ENCODE measurements at regions of chr19 and their contacts with region 1.

Region 1: GRCh38 chr19:10695401-10696398 is 5.5 kb upstream of the QTRT1 start:
- DNase-seq: peak; percentile 84
- ATAC-seq: peak; percentile 91
- H3K4me3 ChIP-seq: peak overlapping the region in 1 of 3 experiments; percentile 18; a peak in 1 of 6 replicates
- H3K27ac ChIP-seq: no peak overlapping the region
- H3K4me1 ChIP-seq: peaks cover 19% of the 10 kb centered on the region
- H3K27me3 ChIP-seq: peaks cover 0 to 3% of the 10 kb centered on the region in 2 experiments; a peak in 1 of 5 replicates
- CTCF ChIP-seq: peak; percentile 48
- EP300 ChIP-seq: no peak
- POLR2A ChIP-seq: no peak
- RAD21 ChIP-seq: no peak

Region 2: GRCh38 chr19:10471909-10472308 is 223.8 kb before region 1 on chr19:
- CTCF ChIA-PET with region 1: no interaction called
- POLR2A ChIA-PET with region 1: no interaction called
- in situ Hi-C with region 1: no loop called
- intact Hi-C with region 1: loop called (anchors 5 kb)
- DNase-seq: peak; percentile 54
- ATAC-seq: peak; percentile 70
- H3K4me3 ChIP-seq: no peak overlapping the region
- H3K27ac ChIP-seq: no peak overlapping the region
- H3K4me1 ChIP-seq: no peaks in the 10 kb centered on the region
- H3K27me3 ChIP-seq: no peaks in the 10 kb centered on the region
- CTCF ChIP-seq: peak; percentile 46; the same call in 1 of the 2 replicates
- EP300 ChIP-seq: no peak
- POLR2A ChIP-seq: no peak
- RAD21 ChIP-seq: no peak

Region 3: DNA sequence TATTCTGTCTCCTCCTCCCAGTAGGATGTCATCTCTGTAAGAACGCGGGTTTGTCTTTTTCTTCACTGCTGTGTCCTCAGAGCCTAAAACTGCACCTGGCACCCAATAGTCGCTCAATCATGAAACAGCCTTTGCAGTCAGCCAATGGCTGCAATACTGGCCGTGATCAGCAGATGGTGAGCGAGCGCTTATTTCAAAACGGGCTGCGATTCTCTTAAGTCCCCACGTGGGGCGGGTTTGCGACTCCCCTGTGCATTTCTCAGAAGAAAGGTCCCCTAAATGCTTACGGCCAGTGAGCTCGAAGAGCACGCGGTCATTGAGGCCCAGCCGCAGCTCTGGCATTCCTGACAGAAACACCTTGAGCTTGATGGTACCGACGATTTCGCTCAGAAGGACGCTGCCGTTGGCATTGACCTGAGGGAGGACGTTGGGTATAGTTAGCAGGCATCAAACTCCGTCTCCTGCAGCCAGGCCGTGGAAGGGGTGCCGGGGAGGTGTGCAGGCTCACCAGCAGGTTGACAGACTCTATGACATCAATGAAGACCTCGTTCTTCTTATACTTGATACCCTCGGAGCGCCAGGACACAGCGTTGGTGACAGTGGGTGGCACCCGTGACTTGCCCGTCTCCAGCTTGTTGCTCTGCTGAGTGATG is 114.6 kb before region 1 on chr19:
- CTCF ChIA-PET with region 1: interaction called, 13 read pairs
- POLR2A ChIA-PET with region 1: interaction called, 9 read pairs
- in situ Hi-C with region 1: no loop called
- intact Hi-C with region 1: loop called (anchors 1 kb)
- DNase-seq: peak; percentile 86
- ATAC-seq: peak; percentile 51
- H3K4me3 ChIP-seq: peak overlapping the region in 1 of 3 experiments; percentile 59; a peak in 2 of 6 replicates
- H3K27ac ChIP-seq: no peak overlapping the region
- H3K4me1 ChIP-seq: peaks cover 30% of the 10 kb centered on the region
- H3K27me3 ChIP-seq: peaks cover 3 to 14% of the 10 kb centered on the region in 2 experiments; a peak in 3 of 5 replicates
- CTCF ChIP-seq: peak; percentile 97
- EP300 ChIP-seq: no peak
- POLR2A ChIP-seq: no peak
- RAD21 ChIP-seq: peak; percentile 96